K562 (cell line): ENCODE measurements at regions of chr1 and their contacts with region 1.

Region 1: GRCh38 chr1:151443846-151444782 is 15.2 kb downstream of the POGZ start:
- DNase-seq: peak; percentile 54 to 73 (median 62)
- ATAC-seq: peak; percentile 96
- H3K4me3 ChIP-seq: no peak overlapping the region
- H3K27ac ChIP-seq: no peak overlapping the region
- H3K4me1 ChIP-seq: peaks cover 0 to 3% of the 10 kb centered on the region in 2 experiments; a peak in 2 of 5 replicates
- H3K27me3 ChIP-seq: no peaks in the 10 kb centered on the region
- CTCF ChIP-seq: peak; percentile 71 to 88 (median 78)
- EP300 ChIP-seq: no peak
- POLR2A ChIP-seq: no peak
- RAD21 ChIP-seq: peak; percentile 82 to 83

Region 2: GRCh38 chr1:150148837-150149270 is 1295.3 kb before region 1 on chr1:
- CTCF ChIA-PET with region 1: no interaction called
- POLR2A ChIA-PET with region 1: no interaction called
- in situ Hi-C with region 1: no loop called
- intact Hi-C with region 1: no loop called
- DNase-seq: peak in 1 of 4 experiments; percentile 6
- ATAC-seq: no peak
- H3K4me3 ChIP-seq: no peak overlapping the region
- H3K27ac ChIP-seq: no peak overlapping the region
- H3K4me1 ChIP-seq: peaks cover 24% of the 10 kb centered on the region in 2 experiments
- H3K27me3 ChIP-seq: no peaks in the 10 kb centered on the region
- CTCF ChIP-seq: no peak
- EP300 ChIP-seq: no peak
- POLR2A ChIP-seq: no peak
- RAD21 ChIP-seq: no peak

Region 3: DNA sequence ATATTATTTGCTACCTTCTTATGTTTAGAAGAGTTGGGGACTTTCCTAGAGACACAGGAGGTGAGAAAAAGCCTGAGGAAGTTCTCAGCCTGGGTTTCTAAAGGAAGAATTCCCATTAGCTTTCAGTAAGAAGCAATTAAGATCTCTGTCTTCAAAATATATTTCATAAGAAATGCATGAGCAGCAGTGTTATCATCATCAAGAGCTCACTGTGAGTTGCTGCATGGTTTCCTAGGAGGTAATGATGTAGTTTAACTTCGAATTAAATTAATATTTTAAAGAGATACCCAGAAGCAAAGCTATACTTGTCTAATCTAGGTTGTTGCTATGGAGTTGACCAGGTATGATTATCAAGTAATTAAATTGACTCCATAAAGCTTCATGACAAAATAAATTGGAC is 20.9 kb after region 1 on chr1:
- CTCF ChIA-PET with region 1: no interaction called
- POLR2A ChIA-PET with region 1: no interaction called
- in situ Hi-C with region 1: no loop called
- intact Hi-C with region 1: no loop called
- DNase-seq: no peak
- ATAC-seq: no peak
- H3K4me3 ChIP-seq: no peak overlapping the region
- H3K27ac ChIP-seq: no peak overlapping the region
- H3K4me1 ChIP-seq: peaks cover 0 to 5% of the 10 kb centered on the region in 2 experiments; a peak in 2 of 5 replicates
- H3K27me3 ChIP-seq: no peaks in the 10 kb centered on the region
- CTCF ChIP-seq: no peak
- EP300 ChIP-seq: no peak
- POLR2A ChIP-seq: no peak
- RAD21 ChIP-seq: no peak

Region 4: GRCh38 chr1:151520359-151520758 is 76.2 kb after region 1 on chr1:
- CTCF ChIA-PET with region 1: interaction called, 3 read pairs
- POLR2A ChIA-PET with region 1: interaction called, 3 read pairs
- in situ Hi-C with region 1: no loop called
- intact Hi-C with region 1: loop called (anchors 5 kb)
- DNase-seq: no peak
- ATAC-seq: peak; percentile 43; the same call in 1 of the 3 replicates
- H3K4me3 ChIP-seq: no peak overlapping the region
- H3K27ac ChIP-seq: no peak overlapping the region
- H3K4me1 ChIP-seq: no peaks in the 10 kb centered on the region; a peak in 1 of 5 replicates
- H3K27me3 ChIP-seq: peaks cover 20 to 44% of the 10 kb centered on the region in 2 experiments; a peak in 4 of 5 replicates
- CTCF ChIP-seq: peak in 2 of 3 experiments; percentile 8 to 21; a peak in 1 of 6 replicates
- EP300 ChIP-seq: no peak
- POLR2A ChIP-seq: no peak
- RAD21 ChIP-seq: 0 out of 4 replicates have a peak, but pooled peaks of 1 of the 2 experiments have one; percentile 12

Region 5: DNA sequence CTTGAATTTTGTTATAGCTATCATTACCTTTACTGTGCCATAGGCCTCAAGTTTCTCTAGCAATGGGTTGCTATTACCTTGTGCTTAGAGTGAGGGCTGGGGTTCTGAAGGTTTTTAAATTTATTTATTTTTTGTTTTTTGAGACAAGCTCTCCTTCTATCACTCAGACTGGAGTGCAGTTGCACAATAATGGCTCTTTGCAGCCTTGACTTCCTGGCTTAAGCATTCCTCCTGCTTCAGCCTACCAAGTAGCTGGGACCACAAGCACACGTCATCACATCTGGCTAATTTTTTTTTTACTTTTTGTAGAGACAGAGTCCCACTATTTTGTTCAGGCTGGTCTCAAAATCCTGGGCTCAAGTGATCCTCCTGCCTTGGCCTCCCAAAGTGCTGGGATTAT is 209.3 kb after region 1 on chr1:
- CTCF ChIA-PET with region 1: no interaction called
- POLR2A ChIA-PET with region 1: no interaction called
- in situ Hi-C with region 1: no loop called
- intact Hi-C with region 1: loop called (anchors 5 kb)
- DNase-seq: no peak
- ATAC-seq: no peak
- H3K4me3 ChIP-seq: no peak overlapping the region
- H3K27ac ChIP-seq: no peak overlapping the region
- H3K4me1 ChIP-seq: no peaks in the 10 kb centered on the region; a peak in 1 of 5 replicates
- H3K27me3 ChIP-seq: no peaks in the 10 kb centered on the region
- CTCF ChIP-seq: no peak
- EP300 ChIP-seq: no peak
- POLR2A ChIP-seq: no peak
- RAD21 ChIP-seq: no peak